ENCODE measurements at regions of chr19 and their contacts with region 1.

Region 1: DNA sequence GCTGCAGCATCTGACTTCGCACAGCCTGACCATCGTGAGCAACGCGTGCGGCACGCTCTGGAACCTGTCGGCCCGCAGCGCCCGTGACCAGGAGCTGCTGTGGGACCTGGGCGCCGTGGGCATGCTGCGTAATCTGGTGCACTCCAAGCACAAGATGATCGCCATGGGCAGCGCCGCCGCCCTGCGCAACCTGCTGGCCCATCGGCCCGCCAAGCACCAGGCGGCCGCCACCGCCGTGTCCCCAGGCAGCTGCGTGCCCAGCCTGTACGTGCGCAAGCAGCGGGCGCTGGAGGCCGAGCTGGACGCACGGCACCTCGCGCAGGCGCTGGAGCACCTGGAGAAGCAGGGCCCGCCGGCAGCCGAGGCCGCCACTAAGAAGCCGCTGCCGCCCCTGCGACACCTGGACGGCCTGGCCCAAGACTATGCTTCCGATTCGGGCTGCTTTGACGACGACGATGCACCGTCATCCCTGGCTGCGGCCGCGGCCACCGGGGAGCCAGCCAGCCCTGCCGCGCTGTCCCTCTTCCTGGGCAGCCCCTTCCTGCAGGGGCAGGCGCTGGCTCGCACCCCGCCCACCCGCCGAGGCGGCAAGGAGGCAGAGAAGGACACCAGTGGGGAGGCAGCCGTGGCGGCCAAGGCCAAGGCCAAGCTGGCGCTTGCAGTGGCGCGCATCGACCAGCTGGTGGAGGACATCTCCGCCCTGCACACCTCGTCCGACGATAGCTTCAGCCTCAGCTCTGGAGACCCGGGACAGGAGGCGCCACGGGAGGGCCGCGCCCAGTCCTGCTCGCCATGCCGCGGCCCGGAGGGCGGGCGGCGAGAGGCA is 13.6 kb downstream of the C19orf25 start:
- DNase-seq: no peak
- H3K4me3 Mint-ChIP-seq: no peak overlapping the region
- H3K27ac Mint-ChIP-seq: no peak overlapping the region
- H3K4me1 Mint-ChIP-seq: peaks cover 1% of the 10 kb centered on the region
- H3K27me3 Mint-ChIP-seq: peaks cover 3% of the 10 kb centered on the region

Region 2: GRCh38 chr19:1373534-1374249 is 91.7 kb before region 1 on chr19:
- intact Hi-C with region 1: no loop called
- DNase-seq: no peak
- H3K4me3 Mint-ChIP-seq: no peak overlapping the region
- H3K27ac Mint-ChIP-seq: no peak overlapping the region
- H3K4me1 Mint-ChIP-seq: no peaks in the 10 kb centered on the region
- H3K27me3 Mint-ChIP-seq: no peaks in the 10 kb centered on the region

Region 3: DNA sequence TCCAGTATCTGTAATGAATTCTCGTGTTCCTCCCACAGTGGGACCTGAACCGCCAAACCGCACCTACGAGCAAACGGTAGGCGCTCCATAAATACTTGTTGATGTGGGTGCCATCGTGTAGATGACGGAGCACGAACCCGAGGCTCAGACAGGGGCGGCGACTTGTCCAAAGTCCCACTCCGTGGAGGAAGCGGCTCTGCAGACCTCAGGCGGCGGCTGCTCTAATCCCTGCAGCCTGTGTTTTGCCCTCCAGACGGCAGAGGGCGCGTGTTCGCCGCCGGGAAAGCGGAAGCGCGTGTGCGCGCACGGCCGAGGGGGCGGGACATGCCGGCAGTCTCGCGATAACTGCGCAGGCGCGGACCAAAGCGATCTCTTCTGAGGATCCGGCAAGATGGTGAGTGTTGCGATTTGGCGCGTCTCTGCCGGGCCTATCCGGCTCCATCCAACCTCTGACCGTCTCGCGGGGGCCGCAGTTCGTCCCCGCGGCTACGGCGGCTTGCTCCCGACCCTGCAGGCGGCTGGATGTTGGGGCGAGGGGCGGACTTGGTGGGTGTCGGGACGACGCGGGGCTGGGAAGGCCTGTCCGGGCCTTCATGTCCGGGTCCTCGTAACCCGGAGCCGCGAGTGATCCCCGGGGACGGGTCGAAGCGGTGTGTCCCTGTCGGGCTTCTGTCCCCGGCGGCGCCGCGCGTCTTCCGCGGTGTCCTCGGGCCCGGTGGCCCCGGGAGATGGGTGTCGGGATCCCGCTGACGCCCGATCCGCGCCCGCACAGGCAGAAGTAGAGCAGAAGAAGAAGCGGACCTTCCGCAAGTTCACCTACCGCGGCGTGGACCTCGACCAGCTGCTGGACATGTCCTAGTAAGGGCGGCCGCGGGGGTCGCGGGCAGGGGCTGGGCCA is 27.1 kb before region 1 on chr19 and contains the start of gene RPS15:
- intact Hi-C with region 1: no loop called
- DNase-seq: peak; percentile 94
- H3K4me3 Mint-ChIP-seq: peak within 1 kb of the TSS; percentile 99
- H3K27ac Mint-ChIP-seq: peak within 1 kb of the TSS; percentile 99
- H3K4me1 Mint-ChIP-seq: peaks cover 14% of the 10 kb centered on the region
- H3K27me3 Mint-ChIP-seq: no peaks in the 10 kb centered on the region
- total RNA-seq, gene RPS15: 1,450 and 1,471 TPM in 2 replicates

Region 4: DNA sequence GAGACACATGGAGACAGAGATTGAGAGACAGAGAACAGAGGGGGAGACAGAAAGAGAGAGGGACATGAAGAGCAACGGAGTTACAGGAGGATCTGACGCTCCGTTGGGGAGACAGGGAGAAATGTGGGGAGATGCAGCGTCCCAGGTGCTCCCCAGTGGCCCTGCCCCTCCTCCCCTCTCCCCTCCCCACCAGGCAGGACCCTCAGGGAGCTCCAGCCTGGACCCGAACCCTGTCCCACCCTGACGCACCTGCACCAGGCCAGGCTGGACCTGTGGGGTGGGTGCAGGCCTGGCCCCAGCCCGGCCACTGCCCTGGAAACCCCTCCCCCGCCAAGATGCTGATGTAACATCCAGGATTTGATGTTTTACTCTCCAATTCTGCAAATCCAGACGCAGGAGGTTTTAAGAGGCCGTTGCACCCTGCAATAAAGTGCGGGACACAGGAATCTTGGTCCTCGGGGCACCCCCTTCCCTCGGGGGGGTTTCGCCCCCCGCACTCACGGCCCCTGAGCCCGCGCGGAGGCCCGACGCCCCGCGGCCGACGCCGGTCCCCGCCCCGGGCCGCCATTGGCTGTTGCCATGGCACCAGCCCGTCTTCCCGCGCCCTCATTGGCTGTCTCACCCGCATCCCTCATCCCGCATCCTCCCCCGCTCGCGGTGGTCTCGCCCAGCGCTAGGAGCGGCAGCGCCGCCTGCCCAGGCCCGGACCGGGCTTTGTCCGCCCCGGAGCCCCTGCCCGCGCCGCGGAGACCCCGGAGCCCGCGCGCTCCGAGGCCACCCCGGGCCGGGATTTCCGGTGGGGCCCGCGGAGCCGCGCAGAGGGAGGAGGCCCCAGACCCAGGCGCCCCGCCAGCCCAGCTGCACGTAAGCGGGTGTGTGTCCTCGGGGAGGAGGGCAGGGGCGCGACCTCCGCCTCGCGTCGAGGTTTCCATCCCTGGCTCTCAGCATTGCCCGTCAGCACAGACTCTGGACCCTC is 15.6 kb before region 1 on chr19 and contains the start of gene APC2:
- intact Hi-C with region 1: no loop called
- DNase-seq: no peak
- H3K4me3 Mint-ChIP-seq: no peak within 1 kb of the TSS
- H3K27ac Mint-ChIP-seq: no peak within 1 kb of the TSS
- H3K4me1 Mint-ChIP-seq: peaks cover 2% of the 10 kb centered on the region
- H3K27me3 Mint-ChIP-seq: peaks cover 51% of the 10 kb centered on the region
- total RNA-seq, gene APC2: 0.07 and 0.21 TPM in 2 replicates

Region 5: DNA sequence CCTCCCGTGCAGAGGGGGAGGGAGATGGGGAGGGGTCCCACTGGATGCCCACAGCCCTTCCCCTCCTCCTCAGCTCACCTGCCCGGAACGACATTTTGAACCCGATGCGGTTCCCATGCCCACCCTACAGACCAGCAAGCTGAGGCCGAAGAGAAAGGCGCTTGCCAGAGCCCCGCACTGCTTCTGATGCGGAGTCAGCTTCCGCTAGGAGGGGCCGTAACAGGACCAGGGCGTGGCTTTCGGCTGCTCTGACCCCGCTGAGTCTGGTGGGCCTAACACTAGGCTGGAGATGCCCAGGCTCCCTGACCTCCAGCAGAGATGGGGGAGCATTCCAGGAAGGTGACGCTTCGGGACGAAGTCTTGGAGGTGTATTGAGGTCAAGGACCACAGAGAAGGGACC is 294.6 kb after region 1 on chr19:
- intact Hi-C with region 1: loop called (anchors 5 kb)
- DNase-seq: no peak
- H3K4me3 Mint-ChIP-seq: no peak overlapping the region
- H3K27ac Mint-ChIP-seq: no peak overlapping the region
- H3K4me1 Mint-ChIP-seq: peaks cover 1% of the 10 kb centered on the region
- H3K27me3 Mint-ChIP-seq: peaks cover 68% of the 10 kb centered on the region